Endothelial cell of umbilical vein (primary cell): ENCODE measurements at regions of chr4 and their contacts with region 1.

Region 1: GRCh38 chr4:19983072-19983471 is 268.6 kb upstream of the SLIT2 start:
- DNase-seq: peak; percentile 90
- H3K4me3 ChIP-seq: no peak overlapping the region
- H3K27ac ChIP-seq: peak overlapping the region; percentile 85
- H3K4me1 ChIP-seq: peaks cover 25% of the 10 kb centered on the region
- H3K27me3 ChIP-seq: no peaks in the 10 kb centered on the region
- CTCF ChIP-seq: no peak
- POLR2A ChIP-seq: peak; percentile 19

Region 2: DNA sequence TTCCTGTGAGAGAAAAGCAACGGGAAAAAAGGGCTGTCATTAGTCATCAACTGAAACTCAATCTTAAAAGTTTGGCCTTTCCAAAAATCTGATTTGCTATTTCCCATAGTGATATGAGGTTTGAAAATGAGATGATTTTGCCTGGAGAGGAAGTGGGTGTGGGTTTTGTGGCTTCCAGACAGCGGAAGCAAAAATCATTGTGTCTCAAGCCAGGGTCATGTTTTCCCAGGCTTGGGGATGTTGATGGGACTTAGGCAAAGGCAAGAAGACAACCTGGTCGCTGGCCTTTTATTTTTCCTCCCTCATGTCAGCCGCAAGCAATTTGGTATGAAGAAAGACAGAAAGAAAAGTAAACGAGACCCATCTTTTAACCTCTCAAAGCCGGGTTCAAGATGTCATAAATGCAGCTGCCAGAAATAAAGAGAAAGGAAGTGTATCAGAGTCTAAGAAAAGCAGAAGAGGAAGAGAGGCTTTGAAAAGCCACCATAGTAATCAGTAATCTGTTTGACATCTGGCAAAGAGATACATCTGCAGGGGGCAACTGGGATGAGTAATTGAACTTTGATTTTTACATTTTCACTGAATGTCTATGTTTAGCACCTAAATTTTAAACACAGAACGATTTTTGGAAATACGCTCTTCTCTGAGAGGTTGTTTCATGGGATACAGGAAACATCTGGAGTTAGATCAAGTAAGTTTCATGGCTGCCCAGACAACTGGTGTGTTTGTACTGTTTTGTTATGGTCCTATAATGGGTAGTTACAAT is 253.0 kb before region 1 on chr4:
- CTCF ChIA-PET with region 1: no interaction called
- POLR2A ChIA-PET with region 1: no interaction called
- dilution Hi-C with region 1: no loop called
- intact Hi-C with region 1: loop called (anchors 1 kb)
- DNase-seq: peak; percentile 86
- H3K4me3 ChIP-seq: no peak overlapping the region
- H3K27ac ChIP-seq: peak overlapping the region; percentile 87
- H3K4me1 ChIP-seq: peaks cover 31% of the 10 kb centered on the region
- H3K27me3 ChIP-seq: no peaks in the 10 kb centered on the region
- CTCF ChIP-seq: no peak
- POLR2A ChIP-seq: no peak

Region 3: DNA sequence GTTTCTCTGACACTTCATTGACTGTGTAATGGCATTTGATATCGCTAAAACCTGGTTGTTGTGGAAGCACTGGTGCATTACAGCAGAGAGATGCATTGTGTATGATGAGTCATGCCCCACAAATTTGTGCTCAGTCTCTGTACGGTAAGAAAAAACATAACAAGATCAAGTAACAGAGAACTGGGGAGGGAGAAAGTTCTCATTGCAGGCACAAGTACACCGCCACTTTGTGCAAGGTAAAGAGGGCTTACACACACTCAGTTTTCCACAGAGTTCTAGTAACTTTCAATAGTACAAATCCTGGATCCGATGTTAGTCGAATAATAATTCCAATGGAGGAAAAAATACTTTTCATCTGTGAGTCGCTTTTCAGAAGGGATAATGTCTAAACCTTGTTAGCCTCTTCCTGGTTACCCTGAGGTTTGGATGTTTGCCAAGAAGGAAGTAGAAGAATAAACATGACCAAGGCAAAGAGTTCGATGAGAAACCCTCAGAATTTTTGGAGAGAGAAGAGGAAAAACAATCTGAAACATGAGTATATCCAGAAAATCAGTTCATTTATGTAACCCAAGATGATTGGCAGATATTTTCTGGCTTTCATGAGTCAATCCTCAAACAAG is 243.9 kb before region 1 on chr4:
- CTCF ChIA-PET with region 1: no interaction called
- POLR2A ChIA-PET with region 1: no interaction called
- dilution Hi-C with region 1: no loop called
- intact Hi-C with region 1: loop called (anchors 1 kb)
- DNase-seq: peak; percentile 96
- H3K4me3 ChIP-seq: peak overlapping the region in 2 of 3 experiments; percentile 9 to 41
- H3K27ac ChIP-seq: peak overlapping the region; percentile 84
- H3K4me1 ChIP-seq: peaks cover 22% of the 10 kb centered on the region
- H3K27me3 ChIP-seq: no peaks in the 10 kb centered on the region
- CTCF ChIP-seq: no peak
- POLR2A ChIP-seq: no peak

Region 4: GRCh38 chr4:19776021-19776459 is 207.0 kb before region 1 on chr4:
- CTCF ChIA-PET with region 1: no interaction called
- POLR2A ChIA-PET with region 1: no interaction called
- dilution Hi-C with region 1: no loop called
- intact Hi-C with region 1: loop called (anchors 5 kb)
- DNase-seq: peak; percentile 96
- H3K4me3 ChIP-seq: no peak overlapping the region
- H3K27ac ChIP-seq: peak overlapping the region; percentile 72
- H3K4me1 ChIP-seq: peaks cover 22% of the 10 kb centered on the region
- H3K27me3 ChIP-seq: no peaks in the 10 kb centered on the region
- CTCF ChIP-seq: no peak
- POLR2A ChIP-seq: no peak

Region 5: GRCh38 chr4:19945979-19946380 is 37.1 kb before region 1 on chr4:
- CTCF ChIA-PET with region 1: no interaction called
- POLR2A ChIA-PET with region 1: no interaction called
- dilution Hi-C with region 1: no loop called
- intact Hi-C with region 1: loop called (anchors 1 kb)
- DNase-seq: peak; percentile 84
- H3K4me3 ChIP-seq: no peak overlapping the region
- H3K27ac ChIP-seq: peak overlapping the region; percentile 19
- H3K4me1 ChIP-seq: peaks cover 18% of the 10 kb centered on the region
- H3K27me3 ChIP-seq: no peaks in the 10 kb centered on the region
- CTCF ChIP-seq: no peak
- POLR2A ChIP-seq: no peak

Region 6: DNA sequence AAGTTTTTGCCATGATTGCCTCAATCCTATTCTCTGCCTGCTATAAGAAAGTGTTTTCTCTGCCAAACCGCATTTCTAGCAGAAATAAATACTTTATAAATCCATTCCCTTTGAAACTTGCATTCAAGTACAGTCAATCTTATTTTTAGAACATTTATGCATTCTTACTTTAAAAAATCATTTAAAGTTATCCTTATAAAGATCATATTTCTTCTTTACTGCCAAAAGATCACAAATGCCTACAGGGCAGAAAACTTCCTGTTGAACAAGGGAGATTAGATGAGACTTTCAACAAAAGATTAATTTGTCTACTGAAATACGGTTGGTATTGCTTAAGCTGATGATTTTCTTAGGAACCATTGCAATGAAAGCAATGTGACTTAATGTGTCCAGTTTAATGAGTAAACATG is 61.4 kb after region 1 on chr4:
- CTCF ChIA-PET with region 1: no interaction called
- POLR2A ChIA-PET with region 1: no interaction called
- dilution Hi-C with region 1: no loop called
- intact Hi-C with region 1: loop called (anchors 1 kb)
- DNase-seq: peak; percentile 32
- H3K4me3 ChIP-seq: no peak overlapping the region
- H3K27ac ChIP-seq: no peak overlapping the region
- H3K4me1 ChIP-seq: peaks cover 28% of the 10 kb centered on the region
- H3K27me3 ChIP-seq: no peaks in the 10 kb centered on the region
- CTCF ChIP-seq: no peak
- POLR2A ChIP-seq: no peak

Region 7: GRCh38 chr4:20194124-20195013 is 211.3 kb after region 1 on chr4:
- CTCF ChIA-PET with region 1: no interaction called
- POLR2A ChIA-PET with region 1: no interaction called
- dilution Hi-C with region 1: no loop called
- intact Hi-C with region 1: loop called (anchors 2 kb)
- DNase-seq: peak; percentile 78
- H3K4me3 ChIP-seq: no peak overlapping the region
- H3K27ac ChIP-seq: peak overlapping the region; percentile 58
- H3K4me1 ChIP-seq: peaks cover 20% of the 10 kb centered on the region
- H3K27me3 ChIP-seq: no peaks in the 10 kb centered on the region
- CTCF ChIP-seq: no peak
- POLR2A ChIP-seq: no peak